ENCODE measurements at regions of chr1 and their contacts with region 1.

Region 1: GRCh38 chr1:54604572-54605370 is 18.6 kb downstream of the FAM151A start:
- DNase-seq: peak in 1 of 5 donors; percentile 53
- ATAC-seq: no peak
- H3K4me3 ChIP-seq: no peak overlapping the region
- H3K27ac ChIP-seq: no peak overlapping the region
- H3K4me1 ChIP-seq: peaks cover 0 to 11% (median 0%) of the 10 kb centered on the region in 12 donors
- H3K27me3 ChIP-seq: no peaks in the 10 kb centered on the region
- CTCF ChIP-seq: no peak
- POLR2A ChIP-seq: no peak

Region 2: DNA sequence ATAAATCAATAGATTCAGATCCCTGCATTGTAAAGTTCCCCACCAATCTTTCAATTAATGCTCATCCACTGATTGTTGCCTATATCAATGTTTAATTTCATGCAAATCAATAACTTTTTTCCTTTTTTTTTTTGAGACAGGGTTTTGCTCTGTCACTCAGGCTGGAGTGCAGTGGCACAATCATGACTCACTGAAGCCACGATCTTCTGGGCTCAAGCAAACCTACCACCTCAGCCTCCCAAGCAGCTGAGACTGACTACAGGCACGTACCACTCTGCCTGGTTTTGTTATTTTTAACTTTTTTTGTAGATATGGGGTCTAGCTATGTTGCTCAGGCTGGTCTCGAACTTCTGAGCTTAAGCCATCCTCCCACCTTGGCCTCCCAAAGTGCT is 685.1 kb before region 1 on chr1:
- intact Hi-C with region 1: loop called in 1 of 10 experiments (anchors 5 kb)
- DNase-seq: no peak
- ATAC-seq: no peak
- H3K4me3 ChIP-seq: no peak overlapping the region
- H3K27ac ChIP-seq: no peak overlapping the region
- H3K4me1 ChIP-seq: peaks cover 0 to 5% (median 0%) of the 10 kb centered on the region in 12 donors
- H3K27me3 ChIP-seq: no peaks in the 10 kb centered on the region
- CTCF ChIP-seq: no peak
- POLR2A ChIP-seq: no peak

Measured in heart left ventricle (tissue), 16 donors.